ENCODE measurements at regions of chr3 and their contacts with region 1.

Region 1: GRCh38 chr3:4314688-4315087 is 11.5 kb downstream of the SETMAR start:
- DNase-seq: no peak
- H3K4me3 ChIP-seq: no peak overlapping the region
- H3K27ac ChIP-seq: no peak overlapping the region
- H3K4me1 ChIP-seq: peaks cover 0 to 2% of the 10 kb centered on the region in 2 donors
- H3K27me3 ChIP-seq: no peaks in the 10 kb centered on the region
- CTCF ChIP-seq: no peak
- POLR2A ChIP-seq: no peak

Region 2: DNA sequence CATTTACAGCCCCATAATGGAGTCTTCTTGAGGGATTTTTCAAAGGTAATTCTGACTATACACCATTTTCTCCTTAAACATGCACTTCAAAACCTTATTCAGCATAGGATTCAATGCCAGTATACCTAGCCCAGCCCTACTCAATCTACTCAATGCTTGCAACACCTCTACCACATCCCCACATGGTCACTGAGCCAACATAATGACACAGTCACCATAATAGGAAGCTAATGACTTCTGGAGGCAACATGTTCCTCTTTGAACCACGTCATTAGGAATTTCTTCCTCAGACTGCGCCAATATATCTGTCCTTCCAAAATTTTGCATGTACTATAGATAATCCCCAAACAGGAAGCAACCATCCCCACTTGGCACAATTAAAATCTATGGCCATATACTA is 165.4 kb before region 1 on chr3:
- intact Hi-C with region 1: no loop called
- DNase-seq: no peak
- H3K4me3 ChIP-seq: no peak overlapping the region
- H3K27ac ChIP-seq: no peak overlapping the region
- H3K4me1 ChIP-seq: no peaks in the 10 kb centered on the region
- H3K27me3 ChIP-seq: no peaks in the 10 kb centered on the region
- CTCF ChIP-seq: no peak
- POLR2A ChIP-seq: no peak

Region 3: GRCh38 chr3:5026331-5027218 is 711.9 kb after region 1 on chr3:
- intact Hi-C with region 1: loop called (anchors 5 kb)
- DNase-seq: peak; percentile 80 to 81
- H3K4me3 ChIP-seq: peak overlapping the region; percentile 34 to 66 (median 53)
- H3K27ac ChIP-seq: peak overlapping the region; percentile 85 to 93
- H3K4me1 ChIP-seq: no peaks in the 10 kb centered on the region
- H3K27me3 ChIP-seq: no peaks in the 10 kb centered on the region
- CTCF ChIP-seq: peak in 2 of 3 donors; percentile 77 to 85
- POLR2A ChIP-seq: no peak